ENCODE measurements at regions of chr3 and their contacts with region 1.

Region 1: GRCh38 chr3:46558184-46559043 is 7.7 kb downstream of the LRRC2 start:
- DNase-seq: peak; percentile 58 to 77 (median 70)
- ATAC-seq: peak; percentile 99
- H3K4me3 ChIP-seq: peak overlapping the region; percentile 37
- H3K4me3 Mint-ChIP-seq: peak overlapping the region; percentile 79 to 89 (median 80)
- H3K27ac ChIP-seq: peak overlapping the region; percentile 11
- H3K27ac Mint-ChIP-seq: peak overlapping the region; percentile 19 to 93 (median 51)
- H3K4me1 ChIP-seq: peaks cover 5 to 12% of the 10 kb centered on the region in 2 donors
- H3K4me1 Mint-ChIP-seq: peaks cover 9 to 20% (median 17%) of the 10 kb centered on the region in 7 donors
- H3K27me3 ChIP-seq: no peaks in the 10 kb centered on the region
- H3K27me3 Mint-ChIP-seq: peaks cover 0 to 72% (median 0%) of the 10 kb centered on the region in 5 donors

Region 2: DNA sequence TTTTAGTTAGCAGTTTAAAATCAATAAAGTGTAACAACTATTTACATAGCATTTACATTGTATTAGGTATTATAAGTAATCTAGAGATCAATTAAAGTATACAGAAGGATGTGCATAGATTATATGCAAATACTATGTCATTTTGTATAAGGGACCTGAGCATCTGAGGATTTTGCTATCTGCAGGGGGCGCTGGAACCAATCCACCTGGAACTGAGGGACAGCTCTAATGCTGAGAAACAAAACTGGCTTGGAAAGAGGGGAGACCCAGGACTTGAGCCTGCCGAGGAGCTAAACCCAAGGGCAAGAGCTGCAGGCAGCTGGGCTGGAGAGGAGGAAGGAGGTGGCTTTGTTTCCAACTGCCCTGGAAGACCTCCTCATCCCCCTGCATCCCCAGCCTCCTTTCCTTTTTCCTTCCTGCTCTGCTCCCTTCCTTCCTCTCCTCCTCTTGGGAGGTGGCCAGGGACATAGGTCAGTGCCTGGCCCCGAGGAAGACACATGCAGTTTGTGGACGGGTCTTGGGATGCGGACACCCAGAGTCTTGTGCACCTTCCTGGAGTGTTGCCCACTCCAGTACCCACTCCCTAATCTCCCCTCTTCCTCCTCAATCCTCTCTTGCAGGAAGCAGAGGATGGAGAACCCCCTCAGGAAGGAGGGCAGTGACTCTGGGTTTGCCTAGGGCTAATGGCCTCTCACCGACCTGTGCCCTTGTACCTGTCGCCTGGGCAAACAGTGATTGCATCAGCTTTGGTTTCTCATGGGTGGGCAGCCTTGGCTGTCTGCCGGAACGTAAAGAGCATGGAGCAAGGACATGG is 61.5 kb before region 1 on chr3:
- CTCF ChIA-PET with region 1: interaction called, 34 read pairs
- POLR2A ChIA-PET with region 1: no interaction called
- intact Hi-C with region 1: loop called (anchors 1 kb)
- DNase-seq: peak in 7 of 9 donors; percentile 15 to 46 (median 31)
- ATAC-seq: peak; percentile 44
- H3K4me3 ChIP-seq: no peak overlapping the region
- H3K4me3 Mint-ChIP-seq: no peak overlapping the region
- H3K27ac ChIP-seq: no peak overlapping the region
- H3K27ac Mint-ChIP-seq: peak overlapping the region in 2 of 9 donors; percentile 24 to 83
- H3K4me1 ChIP-seq: peaks cover 5% of the 10 kb centered on the region in 2 donors
- H3K4me1 Mint-ChIP-seq: peaks cover 5 to 20% (median 9%) of the 10 kb centered on the region in 7 donors
- H3K27me3 ChIP-seq: no peaks in the 10 kb centered on the region
- H3K27me3 Mint-ChIP-seq: peaks cover 0 to 9% (median 0%) of the 10 kb centered on the region in 5 donors

Region 3: DNA sequence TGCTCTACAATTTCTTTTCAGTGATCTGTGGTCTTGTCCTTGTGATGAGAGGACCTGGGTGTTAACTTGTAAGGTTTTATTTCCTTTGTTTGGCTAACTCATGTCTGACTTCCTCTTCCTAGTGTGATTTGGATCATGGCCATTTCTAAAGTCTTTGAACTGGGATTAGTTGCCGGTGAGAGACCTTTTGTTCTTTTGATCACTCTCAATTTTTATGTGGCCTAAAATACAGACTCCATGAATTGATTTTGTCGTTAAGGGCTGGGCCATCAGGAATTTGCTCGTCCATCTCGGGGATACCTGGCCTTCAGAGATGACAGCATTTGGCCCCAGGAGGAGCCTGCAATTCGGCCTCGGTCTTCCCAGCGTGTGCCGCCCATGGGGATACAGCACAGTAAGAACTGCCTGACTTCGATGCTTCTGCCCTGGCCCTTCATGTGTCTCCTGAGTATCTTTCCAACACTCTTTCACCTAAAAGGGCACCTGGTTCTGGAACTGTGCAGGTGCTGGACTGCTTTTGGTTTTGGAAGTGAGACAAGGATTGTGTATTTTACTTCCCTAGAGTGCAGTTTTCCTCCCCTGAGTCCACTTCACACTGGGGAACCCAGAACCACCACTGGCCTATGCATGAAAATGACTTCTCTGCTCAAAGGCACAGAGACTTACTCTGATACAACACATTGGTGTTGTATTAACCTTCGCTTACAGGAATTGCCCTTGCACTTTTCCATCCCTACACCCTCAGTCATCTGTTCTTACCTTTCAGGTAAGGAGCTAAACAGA is 20.8 kb after region 1 on chr3:
- CTCF ChIA-PET with region 1: interaction called, 3 read pairs
- POLR2A ChIA-PET with region 1: interaction called, 5 read pairs
- intact Hi-C with region 1: loop called in 1 of 2 experiments (anchors 1 kb)
- DNase-seq: no peak
- ATAC-seq: no peak
- H3K4me3 ChIP-seq: no peak overlapping the region
- H3K4me3 Mint-ChIP-seq: no peak overlapping the region
- H3K27ac ChIP-seq: no peak overlapping the region
- H3K27ac Mint-ChIP-seq: peak overlapping the region in 1 of 9 donors; percentile 43
- H3K4me1 ChIP-seq: peaks cover 0 to 4% of the 10 kb centered on the region in 2 donors
- H3K4me1 Mint-ChIP-seq: peaks cover 0 to 14% (median 11%) of the 10 kb centered on the region in 7 donors
- H3K27me3 ChIP-seq: no peaks in the 10 kb centered on the region
- H3K27me3 Mint-ChIP-seq: peaks cover 0 to 39% (median 0%) of the 10 kb centered on the region in 5 donors

Region 4: DNA sequence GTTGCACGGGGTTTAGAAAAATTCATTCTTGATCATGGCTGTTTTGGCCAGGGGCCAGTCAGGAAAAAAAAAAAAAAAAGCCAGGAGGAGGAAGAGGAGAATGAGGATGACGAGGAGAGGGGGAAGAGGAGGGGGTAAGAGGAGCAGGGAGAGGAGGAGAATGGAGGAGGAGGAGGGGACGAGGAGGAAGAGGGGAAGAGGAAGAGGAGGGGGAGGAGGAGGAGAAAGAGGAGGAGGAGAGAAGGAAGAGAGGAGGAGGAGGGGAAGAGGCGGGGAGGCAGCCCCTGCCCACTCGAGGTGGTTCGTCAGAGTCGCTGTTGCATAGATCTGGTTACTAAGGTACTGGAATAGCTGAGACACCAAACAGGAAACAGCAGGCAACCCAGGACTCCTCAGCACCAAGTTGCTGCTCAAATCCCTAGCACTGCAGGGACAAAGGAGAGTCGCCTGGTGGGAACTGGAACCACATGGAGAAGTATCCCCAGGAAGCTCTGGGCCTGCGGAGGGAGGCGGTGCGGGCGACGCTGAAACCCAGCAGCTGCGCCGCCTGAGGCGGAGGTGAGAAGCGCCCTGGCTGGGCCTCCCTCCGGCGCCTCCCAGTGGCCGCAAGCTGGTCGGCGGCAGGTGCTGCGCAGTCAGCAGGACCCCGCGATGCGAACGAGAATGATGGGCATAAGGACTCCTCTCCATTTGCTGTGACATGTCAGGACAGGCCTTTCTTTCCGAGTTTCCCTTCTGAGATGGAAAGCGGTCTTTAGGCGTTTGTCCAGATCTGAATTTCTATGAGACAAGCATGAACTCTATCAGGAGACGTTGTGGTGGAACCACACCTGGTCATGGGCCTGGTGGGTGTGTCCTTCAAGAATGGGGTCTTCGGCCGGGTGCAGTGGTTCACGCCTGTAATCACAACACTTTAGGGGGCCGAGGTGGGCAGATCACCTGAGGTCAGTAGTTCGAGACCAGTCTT is 71.4 kb after region 1 on chr3:
- CTCF ChIA-PET with region 1: interaction called, 17 read pairs
- POLR2A ChIA-PET with region 1: no interaction called
- intact Hi-C with region 1: loop called in 1 of 2 experiments (anchors 1 kb)
- DNase-seq: peak; percentile 61 to 82 (median 77)
- ATAC-seq: peak; percentile 98
- H3K4me3 ChIP-seq: peak overlapping the region; percentile 73
- H3K4me3 Mint-ChIP-seq: peak overlapping the region; percentile 67 to 86 (median 79)
- H3K27ac ChIP-seq: peak overlapping the region; percentile 62
- H3K27ac Mint-ChIP-seq: peak overlapping the region; percentile 76 to 97 (median 90)
- H3K4me1 ChIP-seq: peaks cover 9 to 29% of the 10 kb centered on the region in 2 donors
- H3K4me1 Mint-ChIP-seq: peaks cover 13 to 42% (median 30%) of the 10 kb centered on the region in 7 donors
- H3K27me3 ChIP-seq: no peaks in the 10 kb centered on the region
- H3K27me3 Mint-ChIP-seq: peaks cover 0 to 17% (median 0%) of the 10 kb centered on the region in 5 donors

Measured in naive thymus-derived CD4-positive, alpha-beta T cell (primary cell).